Activated naive CD4-positive, alpha-beta T cell treated with anti-CD3 and anti-CD28 coated beads for 36 hours (primary cell): ENCODE measurements at regions of chr2 and their contacts with region 1.

Region 1: DNA sequence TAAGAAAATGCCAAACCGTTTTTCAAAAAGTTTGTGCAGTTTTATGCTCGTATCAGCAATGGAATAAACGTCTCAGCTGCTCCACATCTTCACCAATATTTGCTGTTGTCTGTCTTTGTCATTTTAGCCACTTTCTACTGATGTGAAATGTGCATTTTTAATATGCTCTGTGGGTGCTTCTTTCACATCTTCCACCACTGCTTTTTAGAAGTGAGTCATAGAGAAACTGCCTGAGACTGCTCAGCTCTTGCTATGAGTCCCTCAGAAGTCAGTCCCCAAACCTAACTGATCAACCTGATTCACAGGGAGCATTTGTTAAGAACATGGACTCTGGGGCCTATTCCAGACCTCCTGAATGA is 41.0 kb upstream of the EPC2 start:
- DNase-seq: peak; percentile 56
- H3K4me3 Mint-ChIP-seq: no peak overlapping the region
- H3K27ac Mint-ChIP-seq: peak overlapping the region; percentile 82
- H3K4me1 Mint-ChIP-seq: peaks cover 16% of the 10 kb centered on the region
- H3K27me3 Mint-ChIP-seq: no peaks in the 10 kb centered on the region

Region 2: DNA sequence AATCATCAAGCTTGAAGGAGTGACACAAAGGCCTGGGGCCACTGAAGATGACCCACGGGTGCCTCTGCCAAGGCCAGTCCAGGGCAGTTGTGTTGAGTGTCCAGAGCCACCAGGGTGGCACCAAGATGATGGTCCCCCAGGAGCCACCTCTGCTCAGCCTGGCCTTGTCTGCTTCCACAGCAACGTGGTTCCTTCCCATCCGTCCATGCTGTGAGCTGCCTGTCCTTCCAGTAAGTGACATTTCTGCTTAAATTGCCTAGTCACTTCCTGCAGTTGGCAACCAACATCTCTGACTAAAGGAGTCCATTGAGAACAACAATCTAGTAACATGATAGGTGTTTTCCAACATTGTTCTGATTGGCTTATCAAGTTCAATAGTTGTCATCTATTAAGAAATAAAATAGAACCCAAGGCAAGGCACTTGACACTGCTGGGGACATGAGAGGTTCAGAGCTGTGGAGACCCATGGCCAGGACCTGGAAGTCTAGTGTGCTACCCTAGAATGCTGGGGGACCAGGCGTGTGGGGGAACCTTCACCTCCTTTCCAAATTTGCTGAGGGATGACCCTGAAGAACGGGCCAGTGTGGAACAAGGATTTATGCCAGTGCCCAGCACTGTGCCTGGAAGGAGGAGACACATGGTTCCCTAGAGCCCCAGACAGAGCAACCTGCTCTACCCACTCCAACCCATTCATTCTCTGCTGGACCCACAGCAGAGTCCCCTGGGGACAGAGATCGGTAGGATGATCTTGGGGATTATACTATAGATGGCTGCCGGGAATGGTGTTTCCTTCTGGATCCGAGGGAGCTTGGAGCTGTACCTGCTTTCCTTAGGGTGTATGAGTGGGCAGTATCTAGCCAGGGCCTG is 57.9 kb before region 1 on chr2:
- CTCF ChIA-PET with region 1: no interaction called
- intact Hi-C with region 1: loop called (anchors 1 kb)
- DNase-seq: peak; percentile 72
- H3K4me3 Mint-ChIP-seq: no peak overlapping the region
- H3K27ac Mint-ChIP-seq: peak overlapping the region; percentile 88
- H3K4me1 Mint-ChIP-seq: peaks cover 43% of the 10 kb centered on the region
- H3K27me3 Mint-ChIP-seq: no peaks in the 10 kb centered on the region

Region 3: GRCh38 chr2:148590612-148591011 is 12.9 kb before region 1 on chr2:
- CTCF ChIA-PET with region 1: no interaction called
- intact Hi-C with region 1: loop called (anchors 1 kb)
- DNase-seq: no peak
- H3K4me3 Mint-ChIP-seq: no peak overlapping the region
- H3K27ac Mint-ChIP-seq: no peak overlapping the region
- H3K4me1 Mint-ChIP-seq: peaks cover 2% of the 10 kb centered on the region
- H3K27me3 Mint-ChIP-seq: no peaks in the 10 kb centered on the region

Region 4: DNA sequence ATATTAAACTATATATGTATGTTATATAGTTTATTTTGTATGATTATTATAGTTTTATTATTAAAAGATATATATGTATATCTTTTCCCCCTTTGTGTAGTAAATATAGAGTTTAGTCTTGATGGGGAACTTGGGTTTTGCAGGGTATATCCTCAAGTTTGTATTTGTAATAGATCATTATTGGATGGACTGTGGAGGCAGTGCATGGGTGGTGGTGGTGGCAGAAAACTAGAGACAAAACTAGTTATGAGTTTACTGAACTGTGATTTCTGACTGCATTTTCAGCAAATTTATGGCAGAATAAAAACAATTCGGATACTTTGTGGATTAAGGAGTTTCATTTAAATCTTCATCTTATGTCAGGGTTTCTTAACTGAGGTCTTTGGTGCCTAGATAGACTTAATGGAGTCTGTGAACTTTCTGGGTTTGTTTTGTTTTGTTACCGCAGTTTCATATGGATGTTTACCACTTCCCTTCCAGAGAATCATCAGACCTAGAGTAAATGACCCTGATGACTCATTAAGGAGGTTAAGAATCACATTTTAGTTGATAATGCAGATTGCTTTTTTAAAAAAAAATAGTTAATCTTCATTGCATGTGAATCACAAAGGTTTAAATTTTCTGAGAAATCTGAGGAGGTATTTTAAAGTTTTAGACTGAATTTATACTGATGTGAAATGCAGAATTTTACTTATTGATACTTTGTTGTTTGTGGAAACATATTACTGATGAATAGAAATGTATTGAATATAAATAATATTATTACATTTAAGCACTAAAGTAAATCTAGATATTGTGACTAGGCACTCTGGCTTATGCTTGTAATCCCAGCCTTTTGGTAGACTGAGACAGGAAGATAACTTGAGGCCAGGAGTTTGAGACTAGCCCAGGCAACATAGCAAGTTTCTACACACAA is 55.5 kb after region 1 on chr2:
- CTCF ChIA-PET with region 1: no interaction called
- intact Hi-C with region 1: loop called (anchors 2 kb)
- DNase-seq: no peak
- H3K4me3 Mint-ChIP-seq: no peak overlapping the region
- H3K27ac Mint-ChIP-seq: peak overlapping the region; percentile 8
- H3K4me1 Mint-ChIP-seq: peaks cover 70% of the 10 kb centered on the region
- H3K27me3 Mint-ChIP-seq: no peaks in the 10 kb centered on the region